ENCODE measurements at regions of chr4 and their contacts with region 1.

Region 1: DNA sequence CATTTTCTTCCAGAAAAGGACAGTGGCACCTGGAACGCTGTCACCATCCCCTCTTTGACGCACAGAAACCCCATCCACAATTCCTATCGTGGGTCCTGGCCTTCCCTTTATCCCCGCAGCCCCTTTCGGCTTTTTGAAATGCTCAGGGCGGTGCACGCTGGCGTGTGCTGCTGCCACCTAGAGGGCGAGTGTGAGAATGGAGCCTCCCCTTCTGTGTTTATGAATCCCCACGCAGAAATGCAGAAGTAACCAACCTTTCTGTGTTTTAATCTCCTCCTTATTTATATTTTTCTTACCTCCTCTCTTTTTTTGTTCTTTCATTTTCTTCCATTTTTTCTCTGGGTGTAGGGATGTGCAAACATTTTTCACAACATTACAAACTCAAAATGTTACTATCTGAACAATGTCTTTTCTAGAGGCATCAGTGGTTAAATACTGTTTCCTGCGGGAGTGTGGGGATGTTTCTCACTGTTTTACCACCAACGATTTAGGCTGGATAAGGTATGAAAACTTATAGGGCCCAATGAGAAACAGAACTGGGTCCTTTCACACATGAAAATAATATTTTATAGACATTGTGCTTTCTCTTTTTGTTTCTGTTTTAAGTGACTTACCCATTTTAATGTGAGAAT is 50.0 kb downstream of the TMA16 start:
- DNase-seq: no peak
- H3K4me3 ChIP-seq: peak overlapping the region; percentile 44
- H3K27ac ChIP-seq: no peak overlapping the region
- H3K27me3 ChIP-seq: no peaks in the 10 kb centered on the region
- CTCF ChIP-seq: peak; percentile 98

Region 2: DNA sequence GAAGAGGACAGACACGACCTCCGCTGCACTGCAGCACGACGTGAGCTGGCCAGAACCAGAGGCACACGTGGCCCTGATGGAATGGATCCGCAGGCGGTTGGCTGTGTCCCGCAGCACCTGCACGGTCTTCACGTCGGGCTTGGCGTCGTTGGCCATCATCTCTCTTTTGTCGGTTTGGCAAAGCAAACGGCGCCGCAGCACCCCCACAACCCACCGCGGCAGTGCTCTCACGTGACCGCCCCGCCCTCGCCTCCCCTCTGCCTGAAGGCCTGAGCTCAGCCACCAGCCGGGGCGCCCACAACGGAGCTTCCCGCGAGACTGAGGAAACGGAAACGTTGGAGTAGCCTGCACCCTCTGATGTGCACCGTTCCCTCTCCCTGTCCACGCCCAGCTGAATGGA is 70.9 kb before region 1 on chr4 and contains the start of gene TKTL2:
- CTCF ChIA-PET with region 1: interaction called, 95 read pairs
- POLR2A ChIA-PET with region 1: no interaction called
- DNase-seq: no peak
- H3K4me3 ChIP-seq: no peak within 1 kb of the TSS
- H3K27ac ChIP-seq: no peak within 1 kb of the TSS
- H3K27me3 ChIP-seq: peaks cover 2% of the 10 kb centered on the region
- CTCF ChIP-seq: no peak
- polyA plus RNA-seq, gene TKTL2: not detected in 2 replicates

Region 3: GRCh38 chr4:163523791-163524365 is 20.6 kb before region 1 on chr4:
- CTCF ChIA-PET with region 1: interaction called, 55 read pairs
- POLR2A ChIA-PET with region 1: no interaction called
- DNase-seq: no peak
- H3K4me3 ChIP-seq: no peak overlapping the region
- H3K27ac ChIP-seq: no peak overlapping the region
- H3K27me3 ChIP-seq: no peaks in the 10 kb centered on the region
- CTCF ChIP-seq: no peak

Region 4: GRCh38 chr4:163582703-163583102 is 38.2 kb after region 1 on chr4:
- CTCF ChIA-PET with region 1: no interaction called
- POLR2A ChIA-PET with region 1: no interaction called
- DNase-seq: no peak
- H3K4me3 ChIP-seq: no peak overlapping the region
- H3K27ac ChIP-seq: no peak overlapping the region
- H3K27me3 ChIP-seq: no peaks in the 10 kb centered on the region
- CTCF ChIP-seq: no peak

Region 5: DNA sequence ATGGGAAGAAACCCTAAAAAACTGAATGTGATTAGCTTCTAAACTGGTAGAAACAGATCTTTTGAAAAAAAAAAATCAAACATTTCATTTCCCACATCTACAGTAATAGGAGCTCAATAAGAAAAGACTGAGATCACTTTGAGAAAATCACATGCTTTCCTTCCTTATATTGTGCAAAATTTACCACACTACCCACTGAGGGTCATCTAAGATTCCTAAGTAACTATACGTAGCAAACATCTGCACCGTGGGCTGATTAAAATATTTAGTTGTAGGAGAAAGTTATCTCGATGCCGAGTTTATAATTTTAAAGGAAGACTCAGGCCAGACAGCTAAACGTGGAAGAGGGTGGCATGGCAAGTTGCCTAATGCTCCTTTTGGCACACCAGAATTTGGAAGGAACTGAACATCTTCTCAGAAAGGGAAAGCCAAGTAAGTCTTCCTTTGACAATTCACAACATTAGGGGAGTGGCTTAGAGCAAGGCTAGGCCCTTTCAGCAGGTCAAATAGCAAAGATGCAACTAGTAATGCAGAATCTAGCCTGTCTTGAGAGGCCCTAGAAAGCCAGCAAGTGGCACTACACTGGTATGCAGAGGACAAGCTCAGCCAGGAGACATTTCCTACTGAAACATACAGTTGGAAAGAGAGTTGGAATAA is 78.0 kb after region 1 on chr4:
- CTCF ChIA-PET with region 1: no interaction called
- POLR2A ChIA-PET with region 1: no interaction called
- DNase-seq: no peak
- H3K4me3 ChIP-seq: no peak overlapping the region
- H3K27ac ChIP-seq: no peak overlapping the region
- H3K27me3 ChIP-seq: no peaks in the 10 kb centered on the region
- CTCF ChIP-seq: no peak

Region 6: DNA sequence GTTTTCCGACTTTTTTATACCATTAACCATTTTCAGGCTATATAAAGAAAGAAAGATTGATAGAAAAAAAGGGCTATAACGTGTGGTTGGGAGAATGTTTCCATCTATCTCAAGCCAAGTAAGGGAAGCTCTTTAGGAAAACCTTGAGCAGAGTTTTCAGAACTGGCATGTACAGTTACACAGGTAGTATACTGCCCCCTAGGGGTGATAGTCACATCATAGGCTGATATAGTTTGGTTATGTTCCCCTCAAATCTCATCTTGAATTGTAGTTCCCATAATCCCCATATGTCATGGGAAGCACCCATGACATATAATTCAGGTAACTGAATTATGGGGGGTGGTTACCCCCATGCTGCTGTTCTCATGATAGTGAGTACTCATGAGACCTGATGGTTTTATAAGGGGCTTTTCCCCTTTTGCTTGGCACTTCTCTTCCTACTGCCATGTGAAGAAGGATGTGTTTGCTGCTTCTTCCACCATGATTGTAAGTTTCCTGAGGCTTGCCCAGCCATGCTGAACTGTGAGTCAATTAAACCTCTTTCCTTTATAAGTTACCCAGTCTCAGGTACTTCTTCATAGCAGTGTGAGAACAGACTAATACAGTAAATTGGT is 136.8 kb after region 1 on chr4:
- CTCF ChIA-PET with region 1: interaction called, 24 read pairs
- POLR2A ChIA-PET with region 1: no interaction called
- DNase-seq: no peak
- H3K4me3 ChIP-seq: no peak overlapping the region
- H3K27ac ChIP-seq: no peak overlapping the region
- H3K27me3 ChIP-seq: no peaks in the 10 kb centered on the region
- CTCF ChIP-seq: peak; percentile 54

Region 7: DNA sequence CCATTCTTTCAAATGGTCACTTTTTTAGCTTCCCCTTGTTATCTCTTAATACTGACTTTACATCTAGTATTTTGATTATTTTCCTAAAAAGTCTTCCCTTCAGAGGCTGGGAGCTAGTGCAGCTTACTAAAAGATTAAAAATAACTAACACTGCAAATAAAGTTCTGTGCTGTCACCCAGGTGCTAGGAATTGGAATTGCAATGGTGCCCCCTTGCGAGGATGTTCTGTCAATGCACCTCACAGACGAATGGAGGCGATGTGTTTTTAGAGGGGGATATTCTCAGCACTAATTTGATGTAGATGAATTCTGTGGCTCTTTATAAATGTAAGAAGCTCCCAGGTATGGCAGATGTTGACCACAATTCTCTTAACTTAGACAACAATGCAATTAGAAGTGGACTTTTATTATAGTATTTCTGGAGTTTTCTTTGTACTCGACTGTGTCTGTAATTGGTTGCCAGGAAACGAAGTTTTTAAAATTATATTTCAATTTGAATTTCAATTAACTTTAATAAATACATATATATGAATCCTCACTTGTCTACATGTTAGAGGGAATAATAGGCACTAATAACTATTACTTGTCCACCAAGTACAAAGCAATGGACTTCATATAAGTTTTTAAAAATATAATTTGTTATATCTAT is 1187.4 kb after region 1 on chr4:
- CTCF ChIA-PET with region 1: interaction called, 72 read pairs
- POLR2A ChIA-PET with region 1: no interaction called
- DNase-seq: no peak
- H3K4me3 ChIP-seq: no peak overlapping the region
- H3K27ac ChIP-seq: no peak overlapping the region
- H3K27me3 ChIP-seq: no peaks in the 10 kb centered on the region
- CTCF ChIP-seq: peak; percentile 78

Measured in AG04450 (cell line).